Naive thymus-derived CD8-positive, alpha-beta T cell (primary cell): ENCODE measurements at regions of chr1 and their contacts with region 1.

Region 1: GRCh38 chr1:13748610-13749505 is 48.9 kb downstream of the PRDM2 start:
- DNase-seq: peak; percentile 92 to 98 (median 96)
- ATAC-seq: peak; percentile 89 to 90
- H3K4me3 Mint-ChIP-seq: peak overlapping the region; percentile 83 to 97 (median 93)
- H3K27ac Mint-ChIP-seq: peak overlapping the region; percentile 93 to 98 (median 97)
- H3K4me1 Mint-ChIP-seq: peaks cover 31 to 60% (median 59%) of the 10 kb centered on the region in 4 donors
- H3K27me3 Mint-ChIP-seq: no peaks in the 10 kb centered on the region

Region 2: DNA sequence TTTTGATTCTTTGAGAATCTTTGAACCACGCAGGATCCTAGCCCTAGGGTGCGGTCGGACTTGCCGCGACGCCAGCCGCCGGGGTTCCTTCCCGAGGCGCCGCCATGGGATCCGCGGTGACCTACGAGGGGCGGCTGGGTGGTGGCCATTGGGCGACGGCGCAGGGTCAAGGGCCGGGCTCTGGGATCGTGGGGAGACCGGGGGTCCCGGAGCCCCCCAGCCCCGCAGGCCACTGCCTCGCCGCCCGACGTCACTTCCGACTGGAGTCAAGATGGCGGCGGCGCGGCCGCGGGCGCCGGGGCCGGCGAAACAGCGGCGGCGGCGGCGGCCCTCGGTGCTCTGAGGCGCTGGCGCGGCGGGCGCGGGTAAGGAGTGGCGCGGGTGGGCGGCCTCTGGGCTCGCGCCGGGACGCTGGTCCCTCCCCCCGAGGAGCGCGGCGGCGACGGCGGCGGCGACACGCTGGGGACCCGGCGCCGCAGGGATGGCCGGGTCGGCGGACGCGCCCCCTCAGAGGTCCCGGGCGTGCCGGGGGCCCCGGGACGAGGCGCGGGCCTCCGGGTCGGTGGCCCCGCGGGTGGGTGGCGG is 48.8 kb before region 1 on chr1 and contains the start of gene PRDM2:
- POLR2A ChIA-PET with region 1: interaction called, 35 read pairs
- DNase-seq: peak; percentile 47 to 79 (median 68)
- ATAC-seq: peak; percentile 40 to 58
- H3K4me3 Mint-ChIP-seq: peak within 1 kb of the TSS; percentile 89 to 99 (median 96)
- H3K27ac Mint-ChIP-seq: peak within 1 kb of the TSS; percentile 97 to 100 (median 99)
- H3K4me1 Mint-ChIP-seq: peaks cover 27 to 60% (median 51%) of the 10 kb centered on the region in 4 donors
- H3K27me3 Mint-ChIP-seq: no peaks in the 10 kb centered on the region
- polyA plus RNA-seq, gene PRDM2: 16.8 to 23.0 (median 20.1) TPM

Region 3: GRCh38 chr1:13725714-13726175 is 23.1 kb before region 1 on chr1:
- POLR2A ChIA-PET with region 1: interaction called, 103 read pairs
- DNase-seq: peak; percentile 40 to 79 (median 62)
- ATAC-seq: peak; percentile 43 to 58
- H3K4me3 Mint-ChIP-seq: peak overlapping the region in 4 of 10 donors; percentile 0 to 31 (median 6)
- H3K27ac Mint-ChIP-seq: peak overlapping the region; percentile 44 to 99 (median 86)
- H3K4me1 Mint-ChIP-seq: peaks cover 34 to 92% (median 88%) of the 10 kb centered on the region in 4 donors
- H3K27me3 Mint-ChIP-seq: no peaks in the 10 kb centered on the region

Region 4: DNA sequence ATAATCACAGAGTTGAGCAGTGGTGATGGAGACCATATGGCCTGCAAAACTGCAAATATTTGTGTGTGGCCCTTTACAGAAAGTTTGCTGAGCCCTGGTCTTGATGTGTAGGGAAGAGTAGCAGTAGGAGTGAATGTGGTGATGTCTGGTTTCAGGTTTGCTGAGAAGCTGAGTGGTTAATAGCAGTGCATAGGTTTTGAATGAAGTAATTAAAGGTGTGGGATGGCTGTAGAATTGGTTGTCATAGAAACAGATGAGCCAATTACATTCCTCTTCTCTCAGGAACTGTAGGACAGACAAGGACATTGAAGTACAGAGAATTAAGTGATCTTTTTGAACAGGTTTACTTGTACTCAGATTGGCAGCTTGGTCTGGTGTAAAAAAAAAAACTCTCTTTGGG is 11.5 kb before region 1 on chr1:
- POLR2A ChIA-PET with region 1: interaction called, 103 read pairs
- DNase-seq: no peak
- ATAC-seq: peak; percentile 22 to 36
- H3K4me3 Mint-ChIP-seq: peak overlapping the region in 1 of 10 donors; percentile 39
- H3K27ac Mint-ChIP-seq: peak overlapping the region; percentile 57 to 89 (median 80)
- H3K4me1 Mint-ChIP-seq: peaks cover 30 to 65% (median 61%) of the 10 kb centered on the region in 4 donors
- H3K27me3 Mint-ChIP-seq: no peaks in the 10 kb centered on the region

Region 5: DNA sequence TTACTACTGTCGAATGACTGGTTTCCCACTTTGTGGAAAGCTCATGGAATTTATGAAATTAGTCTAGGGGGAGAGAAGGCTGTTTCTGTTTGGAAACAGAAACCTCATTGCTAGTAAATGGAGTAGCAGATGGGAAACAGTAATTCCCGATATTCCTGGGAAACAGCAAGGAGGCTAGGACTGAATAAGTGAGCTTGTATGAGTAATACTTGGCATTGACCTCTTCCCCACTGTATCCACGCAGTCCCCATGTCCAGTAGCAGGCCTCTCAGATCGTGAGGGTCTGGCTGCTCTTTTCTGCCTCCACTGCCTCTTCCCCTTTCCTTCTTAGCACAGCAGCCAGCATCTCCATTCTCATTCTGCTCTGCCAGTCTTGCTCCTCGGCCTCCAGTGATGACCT is 26.6 kb after region 1 on chr1:
- POLR2A ChIA-PET with region 1: no interaction called
- DNase-seq: no peak
- ATAC-seq: no peak
- H3K4me3 Mint-ChIP-seq: no peak overlapping the region
- H3K27ac Mint-ChIP-seq: no peak overlapping the region
- H3K4me1 Mint-ChIP-seq: peaks cover 19 to 28% (median 21%) of the 10 kb centered on the region in 4 donors
- H3K27me3 Mint-ChIP-seq: no peaks in the 10 kb centered on the region